Endothelial cell of umbilical vein (primary cell): ENCODE measurements at regions of chr1 and their contacts with region 1.

Region 1: DNA sequence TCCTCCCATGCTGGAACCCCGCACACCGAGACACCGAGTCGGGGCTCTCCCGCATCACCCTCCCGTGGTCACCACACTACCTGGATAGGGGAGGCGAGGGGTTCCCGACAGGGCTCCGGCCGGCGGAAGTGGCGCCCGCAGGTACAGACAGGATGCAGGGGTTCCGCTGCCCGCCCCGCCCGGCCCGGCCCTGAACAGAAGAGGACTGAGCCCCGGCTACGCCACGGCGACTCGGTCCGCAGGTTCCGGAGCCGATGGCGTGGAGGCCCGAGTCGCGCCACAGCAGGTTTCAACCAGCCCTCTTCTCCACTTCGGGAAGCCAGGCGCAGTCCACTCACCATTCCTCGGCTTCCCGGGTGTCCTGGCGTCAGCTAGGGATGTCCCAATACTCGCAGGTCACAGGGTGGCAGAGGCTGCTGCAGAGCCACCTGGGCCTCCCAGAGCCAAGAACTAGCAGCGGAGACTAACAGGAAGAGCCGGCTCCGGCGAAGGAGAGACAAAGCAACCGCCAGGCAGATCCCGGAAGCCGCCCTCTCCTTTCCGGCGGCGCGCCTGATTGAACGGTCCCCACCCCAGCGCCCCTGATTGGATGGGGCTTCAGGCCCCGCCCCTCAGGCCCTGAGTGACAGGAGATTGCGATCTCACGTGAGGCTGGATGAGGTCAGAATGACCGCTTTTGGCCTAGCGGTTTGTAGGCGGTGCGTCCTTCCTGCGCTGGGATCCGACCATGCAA is at the start of gene ZNF669:
- DNase-seq: peak; percentile 95
- H3K4me3 ChIP-seq: peak within 1 kb of the TSS; percentile 91 to 98 (median 91)
- H3K27ac ChIP-seq: peak within 1 kb of the TSS; percentile 82
- H3K4me1 ChIP-seq: peaks cover 4% of the 10 kb centered on the region
- H3K27me3 ChIP-seq: no peaks in the 10 kb centered on the region
- CTCF ChIP-seq: no peak
- POLR2A ChIP-seq: peak; percentile 83
- total RNA-seq, gene ZNF669: 7.8 and 9.7 TPM in 2 replicates

Region 2: GRCh38 chr1:247007511-247008405 is 96.3 kb before region 1 on chr1 and contains the start of gene ZNF695:
- CTCF ChIA-PET with region 1: no interaction called
- POLR2A ChIA-PET with region 1: no interaction called
- dilution Hi-C with region 1: no loop called
- intact Hi-C with region 1: loop called (anchors 2 kb)
- DNase-seq: peak; percentile 96
- H3K4me3 ChIP-seq: peak within 1 kb of the TSS; percentile 57 to 79 (median 73)
- H3K27ac ChIP-seq: peak within 1 kb of the TSS; percentile 25
- H3K4me1 ChIP-seq: no peaks in the 10 kb centered on the region
- H3K27me3 ChIP-seq: no peaks in the 10 kb centered on the region
- CTCF ChIP-seq: no peak
- POLR2A ChIP-seq: peak; percentile 25
- total RNA-seq, gene ZNF695: 4.8 and 5.5 TPM in 2 replicates

Region 3: DNA sequence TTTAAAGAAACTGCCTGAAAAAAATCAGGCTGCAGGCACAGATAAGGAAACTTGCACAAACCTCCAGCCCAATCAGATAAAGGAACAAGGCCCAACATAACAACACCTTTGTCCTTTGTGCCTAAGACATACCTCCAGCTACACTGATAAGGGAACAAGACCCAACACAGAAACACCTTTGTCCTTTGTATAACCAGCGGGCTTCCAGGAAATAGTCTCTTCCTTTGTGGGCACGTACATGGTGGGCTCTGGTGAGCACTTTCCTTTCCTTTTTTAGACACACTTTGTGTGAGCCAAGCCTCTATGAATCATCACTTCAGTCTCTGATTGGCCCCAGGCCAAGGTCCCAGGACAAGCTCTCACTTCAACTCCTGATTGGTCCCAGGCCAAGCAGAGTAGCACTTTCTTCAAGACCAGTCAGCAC is 49.0 kb before region 1 on chr1:
- CTCF ChIA-PET with region 1: no interaction called
- POLR2A ChIA-PET with region 1: no interaction called
- dilution Hi-C with region 1: no loop called
- intact Hi-C with region 1: loop called (anchors 5 kb)
- DNase-seq: peak; percentile 71
- H3K4me3 ChIP-seq: no peak overlapping the region
- H3K27ac ChIP-seq: no peak overlapping the region
- H3K4me1 ChIP-seq: peaks cover 6% of the 10 kb centered on the region
- H3K27me3 ChIP-seq: no peaks in the 10 kb centered on the region
- CTCF ChIP-seq: no peak
- POLR2A ChIP-seq: no peak

Region 4: GRCh38 chr1:247078261-247079140 is 25.5 kb before region 1 on chr1 and contains the start of gene ZNF670:
- CTCF ChIA-PET with region 1: no interaction called
- POLR2A ChIA-PET with region 1: no interaction called
- dilution Hi-C with region 1: no loop called
- intact Hi-C with region 1: loop called (anchors 1 kb)
- DNase-seq: peak; percentile 96
- H3K4me3 ChIP-seq: peak within 1 kb of the TSS; percentile 72 to 90 (median 82)
- H3K27ac ChIP-seq: peak within 1 kb of the TSS; percentile 79
- H3K4me1 ChIP-seq: peaks cover 16% of the 10 kb centered on the region
- H3K27me3 ChIP-seq: no peaks in the 10 kb centered on the region
- CTCF ChIP-seq: peak in 1 of 2 donors; percentile 7
- POLR2A ChIP-seq: peak; percentile 79
- total RNA-seq, gene ZNF670: 5.1 and 5.2 TPM in 2 replicates

Region 5: DNA sequence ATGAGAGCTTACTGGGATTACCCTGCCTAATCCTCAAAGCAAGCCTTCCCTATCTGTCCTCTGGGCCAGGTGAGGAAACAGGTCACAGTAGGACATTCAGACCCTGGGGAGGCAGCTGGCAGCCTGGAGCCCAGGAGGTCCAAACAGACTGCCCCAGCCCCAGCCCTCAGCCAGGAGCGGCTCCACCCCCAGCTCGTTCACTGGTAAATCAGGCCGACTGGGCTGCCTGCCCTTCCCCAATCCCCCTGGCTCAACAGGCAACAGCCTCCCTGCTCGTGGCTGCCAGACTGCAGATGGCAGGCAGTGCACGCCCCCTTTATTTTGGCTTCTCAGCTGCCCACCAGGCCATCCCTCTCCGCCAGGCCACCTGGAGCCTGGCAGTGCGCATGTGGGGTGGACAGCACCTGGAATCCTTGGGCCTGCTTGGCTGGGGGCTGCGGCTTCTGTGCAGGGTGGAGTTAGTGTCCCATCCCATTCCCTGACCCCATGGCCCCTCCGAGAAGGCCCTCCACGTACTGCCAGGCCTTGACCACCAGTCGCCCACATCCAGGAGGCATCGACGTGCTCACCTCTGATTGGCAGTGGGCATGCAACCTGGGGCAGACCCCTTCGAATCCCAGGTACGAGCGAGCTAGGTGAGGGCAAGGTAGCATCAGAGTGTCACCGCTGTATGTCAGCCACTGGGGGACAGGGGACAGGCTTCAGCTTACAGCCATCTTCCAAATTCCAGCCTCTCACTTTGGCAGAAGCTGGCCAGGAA is 14.2 kb before region 1 on chr1:
- CTCF ChIA-PET with region 1: no interaction called
- POLR2A ChIA-PET with region 1: no interaction called
- dilution Hi-C with region 1: no loop called
- intact Hi-C with region 1: no loop called
- DNase-seq: no peak
- H3K4me3 ChIP-seq: no peak overlapping the region
- H3K27ac ChIP-seq: no peak overlapping the region
- H3K4me1 ChIP-seq: no peaks in the 10 kb centered on the region
- H3K27me3 ChIP-seq: no peaks in the 10 kb centered on the region
- CTCF ChIP-seq: no peak
- POLR2A ChIP-seq: no peak

Region 6: GRCh38 chr1:247185667-247186066 is 81.6 kb after region 1 on chr1:
- CTCF ChIA-PET with region 1: no interaction called
- POLR2A ChIA-PET with region 1: no interaction called
- dilution Hi-C with region 1: no loop called
- intact Hi-C with region 1: no loop called
- DNase-seq: no peak
- H3K4me3 ChIP-seq: no peak overlapping the region
- H3K27ac ChIP-seq: no peak overlapping the region
- H3K4me1 ChIP-seq: no peaks in the 10 kb centered on the region
- H3K27me3 ChIP-seq: no peaks in the 10 kb centered on the region
- CTCF ChIP-seq: no peak
- POLR2A ChIP-seq: no peak

Region 7: GRCh38 chr1:247210376-247211117 is 106.5 kb after region 1 on chr1:
- CTCF ChIA-PET with region 1: no interaction called
- POLR2A ChIA-PET with region 1: no interaction called
- dilution Hi-C with region 1: no loop called
- intact Hi-C with region 1: loop called (anchors 5 kb)
- DNase-seq: peak; percentile 92
- H3K4me3 ChIP-seq: peak overlapping the region; percentile 72 to 90 (median 81)
- H3K27ac ChIP-seq: peak overlapping the region; percentile 92
- H3K4me1 ChIP-seq: peaks cover 10% of the 10 kb centered on the region
- H3K27me3 ChIP-seq: peaks cover 0 to 18% of the 10 kb centered on the region in 2 experiments
- CTCF ChIP-seq: no peak
- POLR2A ChIP-seq: peak; percentile 84